ENCODE measurements at regions of chr11 and their contacts with region 1.

Region 1: GRCh38 chr11:97445561-97445960 is 1055.7 kb downstream of the JRKL start:
- DNase-seq: no peak
- H3K4me3 ChIP-seq: no peak overlapping the region
- H3K27ac ChIP-seq: no peak overlapping the region
- H3K27me3 ChIP-seq: no peaks in the 10 kb centered on the region
- CTCF ChIP-seq: no peak

Region 2: GRCh38 chr11:97325693-97326092 is 119.9 kb before region 1 on chr11:
- CTCF ChIA-PET with region 1: no interaction called
- POLR2A ChIA-PET with region 1: interaction called, 11 read pairs
- DNase-seq: no peak
- H3K4me3 ChIP-seq: no peak overlapping the region
- H3K27ac ChIP-seq: no peak overlapping the region
- H3K27me3 ChIP-seq: no peaks in the 10 kb centered on the region
- CTCF ChIP-seq: no peak

Measured in AG04450 (cell line).